ENCODE measurements at regions of chr3 and their contacts with region 1.

Region 1: DNA sequence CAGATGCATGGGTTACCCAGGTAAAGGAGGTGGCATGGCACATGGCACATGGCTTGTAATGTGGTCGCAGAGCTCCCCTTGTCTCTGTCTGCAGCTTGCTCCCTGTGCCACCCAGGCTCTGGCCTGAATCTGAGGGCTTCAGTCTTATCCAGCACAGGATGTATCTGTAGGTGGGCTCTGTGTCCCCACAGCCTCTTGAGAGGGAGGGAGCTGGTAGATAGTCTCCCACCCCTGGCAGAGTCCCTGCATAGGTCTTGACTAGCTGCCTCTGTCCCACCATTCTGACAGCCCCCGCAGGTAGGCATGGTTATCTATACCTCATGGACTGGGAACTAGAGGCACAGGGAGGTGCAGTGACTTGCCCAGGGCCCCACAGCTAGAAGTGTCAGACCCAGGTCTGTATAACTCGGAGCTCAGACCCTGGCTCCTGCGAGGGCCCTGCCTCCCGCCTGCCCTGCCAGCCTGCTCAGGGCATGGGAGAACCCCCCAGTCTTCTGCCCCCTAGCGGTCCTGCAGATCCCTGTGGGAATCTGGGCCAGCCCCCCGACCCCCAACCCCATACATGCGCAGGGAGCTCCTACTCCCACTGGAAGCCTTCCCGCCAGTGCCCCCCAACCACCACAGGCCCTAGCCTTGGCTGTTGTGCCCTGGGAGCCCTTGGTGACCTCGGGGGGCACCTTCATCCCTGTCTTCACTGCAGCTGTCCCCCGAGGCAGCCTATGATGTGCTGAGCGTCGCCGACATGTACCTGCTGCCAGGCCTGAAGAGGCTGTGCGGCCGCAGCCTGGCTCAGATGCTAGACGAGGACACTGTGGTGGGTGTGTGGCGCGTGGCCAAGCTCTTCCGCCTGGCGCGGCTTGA is 6.8 kb downstream of the ABTB1 start:
- DNase-seq: no peak
- ATAC-seq: no peak
- H3K4me3 ChIP-seq: no peak overlapping the region
- H3K27ac ChIP-seq: peak overlapping the region in 1 of 10 donors; percentile 72
- H3K4me1 ChIP-seq: peaks cover 0 to 50% (median 10%) of the 10 kb centered on the region in 9 donors
- H3K27me3 ChIP-seq: no peaks in the 10 kb centered on the region
- CTCF ChIP-seq: peak in 2 of 9 donors; percentile 7 to 19

Region 2: GRCh38 chr3:127590593-127591477 is 88.7 kb before region 1 on chr3 and contains the start of gene TPRA1:
- intact Hi-C with region 1: loop called in 1 of 10 experiments (anchors 5 kb)
- DNase-seq: peak; percentile 85 to 94
- ATAC-seq: peak; percentile 90 to 96 (median 94)
- H3K4me3 ChIP-seq: peak within 1 kb of the TSS; percentile 53 to 96 (median 92)
- H3K27ac ChIP-seq: peak within 1 kb of the TSS; percentile 81 to 95 (median 94)
- H3K4me1 ChIP-seq: peaks cover 19 to 55% (median 41%) of the 10 kb centered on the region in 9 donors
- H3K27me3 ChIP-seq: no peaks in the 10 kb centered on the region
- CTCF ChIP-seq: peak in 6 of 9 donors; percentile 16 to 58 (median 36)
- total RNA-seq, gene TPRA1: 11.0 to 24.2 (median 16.3) TPM

Region 3: GRCh38 chr3:127735767-127736704 is 56.5 kb after region 1 on chr3:
- intact Hi-C with region 1: no loop called
- DNase-seq: no peak
- ATAC-seq: peak in 3 of 8 donors; percentile 11 to 43 (median 39)
- H3K4me3 ChIP-seq: peak overlapping the region in 2 of 10 donors; percentile 0 to 1
- H3K27ac ChIP-seq: peak overlapping the region; percentile 62 to 94 (median 82)
- H3K4me1 ChIP-seq: peaks cover 38 to 100% (median 94%) of the 10 kb centered on the region in 9 donors
- H3K27me3 ChIP-seq: no peaks in the 10 kb centered on the region
- CTCF ChIP-seq: no peak

Measured in heart right ventricle (tissue), 16 donors.